ENCODE measurements at regions of chr11 and their contacts with region 1.

Region 1: GRCh38 chr11:7098235-7098832 is 9.5 kb downstream of the RBMXL2 start:
- DNase-seq: no peak
- ATAC-seq: peak; percentile 72
- H3K4me3 Mint-ChIP-seq: no peak overlapping the region
- H3K27ac Mint-ChIP-seq: no peak overlapping the region
- H3K4me1 Mint-ChIP-seq: no peaks in the 10 kb centered on the region
- H3K27me3 Mint-ChIP-seq: peaks cover 9% of the 10 kb centered on the region
- CTCF ChIP-seq: no peak

Region 2: DNA sequence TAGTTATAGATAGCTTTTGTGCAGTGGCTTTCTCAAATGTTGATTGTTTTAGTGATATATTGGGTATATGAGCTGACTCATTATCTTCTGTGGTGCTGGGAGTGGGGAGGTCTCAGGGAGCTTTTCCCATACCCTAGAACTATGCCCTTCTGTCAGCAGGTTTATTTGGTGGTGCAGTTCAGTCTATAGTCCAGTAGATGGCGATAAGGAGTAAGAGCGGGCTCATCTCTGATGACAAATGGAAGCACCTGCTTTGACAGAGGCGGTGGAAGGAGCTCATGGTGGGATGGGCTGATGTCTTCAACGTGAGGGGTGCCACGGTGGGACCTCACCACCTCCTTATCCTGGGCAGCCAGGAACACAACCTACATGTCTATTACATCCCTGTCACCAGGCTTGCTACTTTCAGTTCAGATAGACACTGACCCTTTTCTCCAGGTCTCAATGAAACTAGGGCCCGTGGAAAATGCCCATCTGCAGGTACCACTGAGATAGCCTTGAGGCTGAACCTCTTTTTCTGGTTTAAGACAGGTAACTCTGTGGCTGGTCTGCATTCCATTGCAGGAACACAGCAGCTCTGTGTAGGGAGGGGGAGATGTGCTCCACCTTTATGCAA is 285.8 kb before region 1 on chr11:
- CTCF ChIA-PET with region 1: interaction called, 7 read pairs
- POLR2A ChIA-PET with region 1: no interaction called
- intact Hi-C with region 1: loop called (anchors 5 kb)
- DNase-seq: no peak
- ATAC-seq: peak; percentile 85
- H3K4me3 Mint-ChIP-seq: no peak overlapping the region
- H3K27ac Mint-ChIP-seq: no peak overlapping the region
- H3K4me1 Mint-ChIP-seq: peaks cover 4% of the 10 kb centered on the region
- H3K27me3 Mint-ChIP-seq: peaks cover 9% of the 10 kb centered on the region
- CTCF ChIP-seq: peak; percentile 95

Region 3: DNA sequence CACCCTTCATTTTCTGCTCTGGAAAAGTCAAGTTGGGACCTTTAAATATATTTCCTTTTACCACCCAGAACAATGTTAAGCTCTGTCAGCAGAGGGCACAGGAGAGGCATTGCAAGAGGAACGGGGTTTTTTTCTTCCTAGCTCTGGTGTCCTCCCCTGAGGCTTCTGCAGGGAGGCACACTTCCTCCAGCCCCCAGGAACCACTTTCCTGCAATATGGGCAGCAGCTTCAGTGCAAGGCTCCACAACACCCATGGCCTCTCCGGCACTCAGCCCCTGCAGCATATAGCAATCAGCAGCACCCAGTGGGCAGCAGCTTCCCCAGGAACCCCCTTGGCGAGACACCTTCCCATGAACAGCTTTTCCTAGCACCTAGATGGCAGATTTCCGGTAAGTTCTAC is 254.8 kb after region 1 on chr11:
- CTCF ChIA-PET with region 1: interaction called, 6 read pairs
- POLR2A ChIA-PET with region 1: no interaction called
- intact Hi-C with region 1: loop called (anchors 5 kb)
- DNase-seq: peak; percentile 23
- ATAC-seq: peak; percentile 62
- H3K4me3 Mint-ChIP-seq: no peak overlapping the region
- H3K27ac Mint-ChIP-seq: no peak overlapping the region
- H3K4me1 Mint-ChIP-seq: peaks cover 3% of the 10 kb centered on the region
- H3K27me3 Mint-ChIP-seq: peaks cover 7% of the 10 kb centered on the region
- CTCF ChIP-seq: no peak

Region 4: GRCh38 chr11:7513234-7514098 is 415.1 kb after region 1 on chr11 and contains the start of gene PPFIBP2:
- CTCF ChIA-PET with region 1: no interaction called
- POLR2A ChIA-PET with region 1: no interaction called
- intact Hi-C with region 1: no loop called
- DNase-seq: peak; percentile 94
- ATAC-seq: peak; percentile 69
- H3K4me3 Mint-ChIP-seq: peak within 1 kb of the TSS; percentile 92
- H3K27ac Mint-ChIP-seq: peak within 1 kb of the TSS; percentile 97
- H3K4me1 Mint-ChIP-seq: peaks cover 47% of the 10 kb centered on the region
- H3K27me3 Mint-ChIP-seq: no peaks in the 10 kb centered on the region
- CTCF ChIP-seq: no peak
- total RNA-seq, gene PPFIBP2: 109 and 112 TPM in 2 replicates

Region 5: GRCh38 chr11:7665473-7666291 is 567.3 kb after region 1 on chr11:
- CTCF ChIA-PET with region 1: interaction called, 7 read pairs
- POLR2A ChIA-PET with region 1: no interaction called
- intact Hi-C with region 1: loop called (anchors 1 kb)
- DNase-seq: peak; percentile 75
- ATAC-seq: peak; percentile 99
- H3K4me3 Mint-ChIP-seq: no peak overlapping the region
- H3K27ac Mint-ChIP-seq: no peak overlapping the region
- H3K4me1 Mint-ChIP-seq: peaks cover 5% of the 10 kb centered on the region
- H3K27me3 Mint-ChIP-seq: no peaks in the 10 kb centered on the region
- CTCF ChIP-seq: peak; percentile 51

Region 6: DNA sequence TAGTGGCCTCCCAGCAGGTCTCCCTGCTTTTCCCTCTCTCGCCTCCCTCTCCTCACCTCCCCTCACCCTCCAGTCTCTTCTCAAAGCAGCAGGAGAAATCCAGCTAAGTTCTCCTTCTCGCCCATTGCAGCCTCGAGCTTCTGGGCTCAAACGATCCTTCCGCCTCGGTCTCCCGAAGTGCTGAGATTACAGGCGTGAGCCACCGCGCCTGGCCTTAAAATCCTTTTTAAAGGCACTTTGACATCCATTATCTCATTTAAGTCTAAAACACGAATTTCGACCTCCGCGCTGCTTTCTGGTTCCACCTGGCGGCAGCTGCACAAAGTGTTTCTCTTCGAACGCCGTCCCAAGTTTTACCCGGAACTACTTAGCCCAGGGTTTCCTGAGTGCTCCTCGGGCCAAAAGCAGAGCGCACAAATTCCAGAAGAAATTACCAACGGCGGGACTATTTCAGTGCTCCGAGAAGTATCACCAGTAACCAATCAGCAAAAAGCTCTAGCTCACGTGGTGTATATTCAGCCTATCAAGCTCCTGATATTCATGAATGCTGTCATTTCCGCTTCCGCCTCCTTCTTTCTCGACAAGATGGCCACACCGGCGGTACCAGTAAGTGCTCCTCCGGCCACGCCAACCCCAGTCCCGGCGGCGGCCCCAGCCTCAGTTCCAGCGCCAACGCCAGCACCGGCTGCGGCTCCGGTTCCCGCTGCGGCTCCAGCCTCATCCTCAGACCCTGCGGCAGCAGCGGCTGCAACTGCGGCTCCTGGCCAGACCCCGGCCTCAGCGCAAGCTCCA is 888.6 kb after region 1 on chr11 and contains the start of gene EIF3F:
- CTCF ChIA-PET with region 1: interaction called, 5 read pairs
- POLR2A ChIA-PET with region 1: interaction called, 3 read pairs
- intact Hi-C with region 1: loop called (anchors 1 kb)
- DNase-seq: peak; percentile 73
- ATAC-seq: peak; percentile 97
- H3K4me3 Mint-ChIP-seq: peak within 1 kb of the TSS; percentile 93
- H3K27ac Mint-ChIP-seq: peak within 1 kb of the TSS; percentile 94
- H3K4me1 Mint-ChIP-seq: peaks cover 40% of the 10 kb centered on the region
- H3K27me3 Mint-ChIP-seq: no peaks in the 10 kb centered on the region
- CTCF ChIP-seq: peak; percentile 56
- total RNA-seq, gene EIF3F: 367 and 396 TPM in 2 replicates